Esophagus muscularis mucosa (tissue), 4 donors: ENCODE measurements at regions of chr3 and their contacts with region 1.

Region 1: GRCh38 chr3:133927540-133928066 is 31.9 kb upstream of the RAB6B start:
- DNase-seq: peak; percentile 57
- H3K4me3 ChIP-seq: peak overlapping the region; percentile 60 to 73 (median 62)
- H3K27ac ChIP-seq: peak overlapping the region in 1 of 4 donors; percentile 35
- H3K4me1 ChIP-seq: peaks cover 4 to 17% (median 14%) of the 10 kb centered on the region in 4 donors
- H3K27me3 ChIP-seq: no peaks in the 10 kb centered on the region
- CTCF ChIP-seq: peak; percentile 83 to 86 (median 85)
- EP300 ChIP-seq: no peak
- POLR2A ChIP-seq: no peak

Region 2: GRCh38 chr3:133661454-133662277 is 265.9 kb before region 1 on chr3 and contains the start of gene TOPBP1:
- intact Hi-C with region 1: loop called (anchors 10 kb)
- DNase-seq: no peak
- H3K4me3 ChIP-seq: peak within 1 kb of the TSS; percentile 79 to 98 (median 88)
- H3K27ac ChIP-seq: peak within 1 kb of the TSS; percentile 80 to 88 (median 84)
- H3K4me1 ChIP-seq: peaks cover 23 to 38% (median 24%) of the 10 kb centered on the region in 4 donors
- H3K27me3 ChIP-seq: no peaks in the 10 kb centered on the region
- CTCF ChIP-seq: no peak
- EP300 ChIP-seq: no peak
- POLR2A ChIP-seq: no peak
- total RNA-seq, gene TOPBP1: 15.6 to 29.1 (median 17.5) TPM

Region 3: DNA sequence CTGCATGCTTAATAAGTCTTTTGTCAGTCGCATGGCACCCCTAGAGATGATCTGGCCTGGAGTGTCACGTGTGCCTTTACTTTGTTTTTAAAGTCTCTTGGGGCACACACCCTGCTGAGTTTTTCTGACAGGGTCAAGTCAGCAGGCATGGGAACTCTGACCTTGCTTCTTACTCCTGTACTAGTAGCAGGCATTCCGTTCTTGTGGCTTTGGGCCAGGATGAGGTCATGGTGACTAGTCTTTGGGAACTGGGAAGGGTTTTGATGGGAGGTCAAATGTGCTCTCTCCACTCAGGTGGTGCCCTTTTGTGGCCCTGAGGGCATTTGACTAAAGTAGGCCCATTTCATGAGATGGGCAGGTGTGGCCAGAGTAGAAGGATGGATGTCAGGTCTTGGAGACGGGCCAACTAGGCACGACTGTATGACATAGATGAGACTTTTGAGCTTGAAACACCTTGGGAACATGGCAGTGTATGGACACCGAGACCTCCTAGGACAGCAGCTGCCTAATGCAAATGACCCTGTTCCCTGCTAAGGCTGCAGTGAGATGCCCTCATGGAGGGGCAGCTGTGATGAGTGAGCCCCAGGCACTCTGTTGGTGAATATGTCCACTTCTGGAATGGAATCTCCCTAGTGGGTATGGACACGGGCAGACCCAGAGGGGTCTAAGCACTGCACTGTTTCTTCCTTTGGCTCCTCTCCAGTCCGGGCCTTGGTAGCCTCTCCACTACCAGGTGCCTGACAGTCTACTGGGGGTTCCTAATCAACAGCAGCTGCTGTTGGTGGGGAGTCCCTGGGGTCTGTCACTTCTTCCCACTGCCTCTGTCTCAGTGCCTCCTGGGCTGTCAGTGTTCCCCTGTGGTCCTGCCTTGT is 105.6 kb before region 1 on chr3:
- intact Hi-C with region 1: loop called (anchors 1 kb)
- DNase-seq: peak; percentile 93
- H3K4me3 ChIP-seq: no peak overlapping the region
- H3K27ac ChIP-seq: no peak overlapping the region
- H3K4me1 ChIP-seq: peaks cover 0 to 10% (median 7%) of the 10 kb centered on the region in 4 donors
- H3K27me3 ChIP-seq: no peaks in the 10 kb centered on the region
- CTCF ChIP-seq: peak in 1 of 3 experiments; percentile 27
- EP300 ChIP-seq: no peak
- POLR2A ChIP-seq: no peak

Region 4: DNA sequence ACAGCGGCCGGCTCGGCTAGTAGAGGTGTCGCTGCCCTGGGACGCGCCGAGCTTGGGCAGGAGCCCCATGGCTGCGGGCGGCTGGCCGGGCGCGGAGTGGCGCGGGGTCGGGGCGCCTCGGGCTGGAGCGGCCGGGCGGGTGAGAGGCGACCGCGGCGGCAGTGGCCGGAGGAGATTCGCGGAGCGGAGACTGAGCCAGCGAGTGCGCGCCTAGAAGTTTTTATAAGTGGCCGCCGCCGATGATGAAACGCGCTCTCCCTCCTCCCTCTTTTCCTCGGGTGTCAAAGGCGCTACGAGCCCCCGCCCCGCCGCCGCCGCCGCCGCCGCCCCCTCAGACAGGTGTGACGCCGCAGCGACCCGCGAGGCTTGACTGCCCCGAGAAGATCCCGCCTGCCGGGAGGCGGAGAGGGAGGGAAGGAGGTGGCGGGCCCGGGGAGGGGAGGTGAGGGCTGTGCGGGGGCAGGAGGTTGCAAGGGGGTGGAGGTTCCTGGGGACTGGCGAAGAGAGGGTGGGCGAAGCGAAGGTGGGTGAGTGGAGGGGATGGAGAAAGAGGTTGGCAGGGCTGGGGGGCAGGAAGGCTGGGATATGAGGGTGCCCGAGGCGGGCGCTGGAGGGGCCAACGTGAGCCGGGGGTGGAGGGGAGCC is 102.3 kb after region 1 on chr3 and contains the start of gene SLCO2A1:
- intact Hi-C with region 1: loop called (anchors 10 kb)
- DNase-seq: peak; percentile 74
- H3K4me3 ChIP-seq: peak within 1 kb of the TSS; percentile 64 to 73 (median 68)
- H3K27ac ChIP-seq: peak within 1 kb of the TSS; percentile 53 to 72 (median 62)
- H3K4me1 ChIP-seq: peaks cover 11 to 27% (median 21%) of the 10 kb centered on the region in 4 donors
- H3K27me3 ChIP-seq: peaks cover 0 to 19% (median 0%) of the 10 kb centered on the region in 4 donors
- CTCF ChIP-seq: no peak
- EP300 ChIP-seq: no peak
- POLR2A ChIP-seq: no peak
- total RNA-seq, gene SLCO2A1: 8.3 to 17.6 (median 13.8) TPM

Region 5: DNA sequence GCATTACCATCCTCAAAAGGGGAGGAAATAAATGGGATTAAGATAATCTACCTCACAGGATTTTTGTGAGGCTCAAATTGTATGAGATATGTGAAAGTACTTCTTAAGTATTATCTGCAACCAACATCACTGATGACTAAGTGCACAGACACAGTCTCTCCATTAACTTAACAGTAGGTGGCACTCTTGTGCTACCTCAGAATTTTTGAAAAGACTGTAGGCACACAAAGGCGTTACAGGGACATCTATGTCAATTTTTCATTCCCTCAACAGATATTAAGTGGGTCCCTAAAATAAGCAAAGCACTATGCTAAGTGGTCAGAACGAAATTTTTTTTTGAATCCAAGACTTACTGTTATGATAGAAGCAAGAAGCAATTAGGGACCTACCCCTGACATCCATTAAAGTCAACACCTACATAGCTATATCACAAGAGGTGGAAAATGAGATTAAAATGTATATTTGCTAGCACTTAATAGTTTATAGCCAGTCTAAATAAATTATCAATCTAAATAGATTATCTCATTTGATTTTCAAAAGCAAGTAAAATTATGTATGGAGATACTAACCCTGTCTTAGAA is 270.2 kb after region 1 on chr3:
- intact Hi-C with region 1: loop called (anchors 10 kb)
- DNase-seq: no peak
- H3K4me3 ChIP-seq: no peak overlapping the region
- H3K27ac ChIP-seq: no peak overlapping the region
- H3K4me1 ChIP-seq: no peaks in the 10 kb centered on the region
- H3K27me3 ChIP-seq: no peaks in the 10 kb centered on the region
- CTCF ChIP-seq: peak; percentile 57 to 77 (median 59)
- EP300 ChIP-seq: no peak
- POLR2A ChIP-seq: no peak